Heart right ventricle (tissue), 16 donors: ENCODE measurements at regions of chr11 and their contacts with region 1.

Region 1: GRCh38 chr11:13384908-13385640 is 77.9 kb downstream of the BTBD10 start:
- DNase-seq: peak in 1 of 2 donors; percentile 12
- ATAC-seq: peak in 1 of 8 donors; percentile 44
- H3K4me3 ChIP-seq: no peak overlapping the region
- H3K27ac ChIP-seq: no peak overlapping the region
- H3K4me1 ChIP-seq: peaks cover 0 to 11% (median 0%) of the 10 kb centered on the region in 9 donors
- H3K27me3 ChIP-seq: no peaks in the 10 kb centered on the region
- CTCF ChIP-seq: peak in 8 of 9 donors; percentile 34 to 79 (median 64)

Region 2: GRCh38 chr11:12200279-12201010 is 1184.6 kb before region 1 on chr11:
- intact Hi-C with region 1: no loop called
- DNase-seq: peak in 1 of 2 donors; percentile 68
- ATAC-seq: peak in 7 of 8 donors; percentile 4 to 67 (median 37)
- H3K4me3 ChIP-seq: no peak overlapping the region
- H3K27ac ChIP-seq: peak overlapping the region; percentile 50 to 91 (median 85)
- H3K4me1 ChIP-seq: peaks cover 22 to 68% (median 49%) of the 10 kb centered on the region in 9 donors
- H3K27me3 ChIP-seq: no peaks in the 10 kb centered on the region
- CTCF ChIP-seq: no peak

Region 3: GRCh38 chr11:13423372-13423771 is 38.3 kb after region 1 on chr11:
- intact Hi-C with region 1: loop called in 1 of 10 experiments (anchors 5 kb)
- DNase-seq: no peak
- ATAC-seq: no peak
- H3K4me3 ChIP-seq: no peak overlapping the region
- H3K27ac ChIP-seq: no peak overlapping the region
- H3K4me1 ChIP-seq: peaks cover 0 to 6% (median 0%) of the 10 kb centered on the region in 9 donors
- H3K27me3 ChIP-seq: no peaks in the 10 kb centered on the region
- CTCF ChIP-seq: no peak

Region 4: GRCh38 chr11:13462901-13463778 is 78.1 kb after region 1 on chr11 and contains the start of gene BTBD10:
- intact Hi-C with region 1: loop called in 3 of 10 experiments (anchors 10 kb)
- DNase-seq: peak; percentile 94 to 95
- ATAC-seq: peak; percentile 99 to 100 (median 99)
- H3K4me3 ChIP-seq: peak within 1 kb of the TSS; percentile 67 to 95 (median 88)
- H3K27ac ChIP-seq: peak within 1 kb of the TSS; percentile 61 to 94 (median 90)
- H3K4me1 ChIP-seq: peaks cover 0 to 40% (median 24%) of the 10 kb centered on the region in 9 donors
- H3K27me3 ChIP-seq: peaks cover 0 to 4% (median 0%) of the 10 kb centered on the region in 7 donors
- CTCF ChIP-seq: no peak
- total RNA-seq, gene BTBD10: 20.6 to 36.5 (median 24.4) TPM

Region 5: DNA sequence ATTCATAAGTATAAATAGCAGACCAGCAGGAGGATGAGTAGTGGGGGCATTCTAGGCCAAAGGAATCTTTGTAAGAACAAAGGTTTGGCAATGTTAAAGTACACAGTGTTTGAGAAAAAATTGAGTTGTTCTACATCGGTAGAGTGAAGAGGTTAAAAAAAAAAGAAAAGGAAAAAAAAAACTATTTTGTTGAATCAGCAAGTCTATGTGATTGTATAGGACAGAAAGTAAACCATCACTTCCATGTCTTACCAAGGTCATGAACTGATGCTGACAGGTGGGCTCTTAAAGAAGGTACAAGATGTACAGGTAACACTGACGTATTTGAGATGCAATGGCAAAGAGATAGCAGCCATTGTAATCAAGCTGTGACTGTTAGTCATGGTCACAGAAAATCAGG is 140.2 kb after region 1 on chr11:
- intact Hi-C with region 1: no loop called
- DNase-seq: no peak
- ATAC-seq: no peak
- H3K4me3 ChIP-seq: no peak overlapping the region
- H3K27ac ChIP-seq: no peak overlapping the region
- H3K4me1 ChIP-seq: no peaks in the 10 kb centered on the region
- H3K27me3 ChIP-seq: no peaks in the 10 kb centered on the region
- CTCF ChIP-seq: no peak